CD4-positive, alpha-beta memory T cell (primary cell): ENCODE measurements at regions of chr15 and their contacts with region 1.

Region 1: DNA sequence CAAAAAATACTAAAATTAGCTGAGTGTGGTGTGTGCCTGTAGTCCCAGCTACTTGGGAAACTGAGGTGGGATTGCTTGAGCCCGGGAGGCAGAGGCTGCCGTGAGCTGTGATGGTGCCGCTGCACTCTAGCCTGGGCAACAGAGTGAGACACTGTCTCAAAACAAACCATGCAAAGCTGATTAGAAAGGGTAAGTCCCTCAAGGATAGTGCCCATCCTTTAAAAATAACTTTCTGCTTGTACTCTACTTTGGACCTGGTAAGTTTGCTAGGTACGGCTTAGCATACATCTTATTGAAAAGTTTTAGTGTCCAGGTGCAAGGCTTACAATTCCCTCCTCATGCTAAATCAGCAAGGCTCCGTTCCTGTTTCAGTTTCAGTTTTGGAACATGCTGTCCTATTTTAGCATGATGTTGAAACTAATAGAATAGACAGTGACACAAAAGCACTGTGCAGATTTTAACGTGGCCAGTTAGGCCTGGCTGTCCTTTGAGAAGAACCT is 21.4 kb downstream of the FEM1B start:
- DNase-seq: peak in 4 of 5 donors; percentile 39 to 46 (median 42)
- H3K4me3 ChIP-seq: peak overlapping the region; percentile 43 to 46
- H3K4me3 Mint-ChIP-seq: peak overlapping the region; percentile 77 to 91 (median 84)
- H3K27ac ChIP-seq: peak overlapping the region; percentile 47
- H3K27ac Mint-ChIP-seq: peak overlapping the region; percentile 62 to 95 (median 91)
- H3K4me1 ChIP-seq: peaks cover 17% of the 10 kb centered on the region
- H3K4me1 Mint-ChIP-seq: peaks cover 15 to 40% (median 26%) of the 10 kb centered on the region in 4 donors
- H3K27me3 ChIP-seq: no peaks in the 10 kb centered on the region
- H3K27me3 Mint-ChIP-seq: no peaks in the 10 kb centered on the region

Region 2: DNA sequence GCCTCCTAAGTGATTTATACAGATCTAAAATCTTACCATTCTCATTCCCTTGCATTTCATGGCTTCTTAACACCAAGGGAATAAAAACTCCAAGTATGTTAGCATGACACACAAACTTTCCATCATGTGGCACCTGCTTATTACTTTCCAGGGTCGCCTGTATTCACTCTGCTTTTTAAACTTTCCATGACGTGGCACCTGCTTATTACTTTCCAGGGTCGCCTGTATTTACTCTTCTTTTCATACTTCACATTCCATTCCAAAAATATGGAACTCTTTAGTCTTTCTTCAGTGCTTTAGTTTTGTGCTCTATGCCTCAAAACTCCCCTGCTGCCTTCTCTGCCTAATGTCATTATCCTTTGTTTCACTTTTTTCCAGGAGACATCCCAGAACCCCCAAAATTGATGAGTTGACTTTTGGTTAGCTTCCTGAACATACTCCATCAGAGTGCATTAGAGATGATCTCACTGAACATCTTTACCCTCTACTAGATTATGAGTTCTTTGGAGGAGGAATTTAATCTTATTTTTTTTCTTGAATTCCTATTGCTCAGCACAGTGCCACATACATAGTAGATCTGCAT is 140.8 kb before region 1 on chr15:
- CTCF ChIA-PET with region 1: no interaction called
- POLR2A ChIA-PET with region 1: no interaction called
- intact Hi-C with region 1: no loop called
- DNase-seq: no peak
- H3K4me3 ChIP-seq: no peak overlapping the region
- H3K4me3 Mint-ChIP-seq: no peak overlapping the region
- H3K27ac ChIP-seq: no peak overlapping the region
- H3K27ac Mint-ChIP-seq: no peak overlapping the region
- H3K4me1 ChIP-seq: no peaks in the 10 kb centered on the region
- H3K4me1 Mint-ChIP-seq: peaks cover 0 to 6% (median 4%) of the 10 kb centered on the region in 4 donors
- H3K27me3 ChIP-seq: no peaks in the 10 kb centered on the region
- H3K27me3 Mint-ChIP-seq: no peaks in the 10 kb centered on the region

Region 3: GRCh38 chr15:68283401-68283800 is 15.5 kb before region 1 on chr15:
- CTCF ChIA-PET with region 1: interaction called, 3 read pairs
- POLR2A ChIA-PET with region 1: interaction called, 26 read pairs
- intact Hi-C with region 1: loop called (anchors 2 kb)
- DNase-seq: no peak
- H3K4me3 ChIP-seq: no peak overlapping the region
- H3K4me3 Mint-ChIP-seq: peak overlapping the region in 3 of 8 donors; percentile 25 to 61 (median 51)
- H3K27ac ChIP-seq: no peak overlapping the region
- H3K27ac Mint-ChIP-seq: peak overlapping the region in 1 of 7 donors; percentile 33
- H3K4me1 ChIP-seq: peaks cover 79% of the 10 kb centered on the region
- H3K4me1 Mint-ChIP-seq: peaks cover 61 to 81% (median 71%) of the 10 kb centered on the region in 4 donors
- H3K27me3 ChIP-seq: no peaks in the 10 kb centered on the region
- H3K27me3 Mint-ChIP-seq: no peaks in the 10 kb centered on the region

Region 4: GRCh38 chr15:68372291-68372811 is 73.4 kb after region 1 on chr15:
- CTCF ChIA-PET with region 1: no interaction called
- POLR2A ChIA-PET with region 1: no interaction called
- intact Hi-C with region 1: no loop called
- DNase-seq: no peak
- H3K4me3 ChIP-seq: no peak overlapping the region
- H3K4me3 Mint-ChIP-seq: no peak overlapping the region
- H3K27ac ChIP-seq: no peak overlapping the region
- H3K27ac Mint-ChIP-seq: no peak overlapping the region
- H3K4me1 ChIP-seq: no peaks in the 10 kb centered on the region
- H3K4me1 Mint-ChIP-seq: peaks cover 0 to 2% (median 0%) of the 10 kb centered on the region in 4 donors
- H3K27me3 ChIP-seq: no peaks in the 10 kb centered on the region
- H3K27me3 Mint-ChIP-seq: peaks cover 2 to 3% of the 10 kb centered on the region in 2 donors

Region 5: DNA sequence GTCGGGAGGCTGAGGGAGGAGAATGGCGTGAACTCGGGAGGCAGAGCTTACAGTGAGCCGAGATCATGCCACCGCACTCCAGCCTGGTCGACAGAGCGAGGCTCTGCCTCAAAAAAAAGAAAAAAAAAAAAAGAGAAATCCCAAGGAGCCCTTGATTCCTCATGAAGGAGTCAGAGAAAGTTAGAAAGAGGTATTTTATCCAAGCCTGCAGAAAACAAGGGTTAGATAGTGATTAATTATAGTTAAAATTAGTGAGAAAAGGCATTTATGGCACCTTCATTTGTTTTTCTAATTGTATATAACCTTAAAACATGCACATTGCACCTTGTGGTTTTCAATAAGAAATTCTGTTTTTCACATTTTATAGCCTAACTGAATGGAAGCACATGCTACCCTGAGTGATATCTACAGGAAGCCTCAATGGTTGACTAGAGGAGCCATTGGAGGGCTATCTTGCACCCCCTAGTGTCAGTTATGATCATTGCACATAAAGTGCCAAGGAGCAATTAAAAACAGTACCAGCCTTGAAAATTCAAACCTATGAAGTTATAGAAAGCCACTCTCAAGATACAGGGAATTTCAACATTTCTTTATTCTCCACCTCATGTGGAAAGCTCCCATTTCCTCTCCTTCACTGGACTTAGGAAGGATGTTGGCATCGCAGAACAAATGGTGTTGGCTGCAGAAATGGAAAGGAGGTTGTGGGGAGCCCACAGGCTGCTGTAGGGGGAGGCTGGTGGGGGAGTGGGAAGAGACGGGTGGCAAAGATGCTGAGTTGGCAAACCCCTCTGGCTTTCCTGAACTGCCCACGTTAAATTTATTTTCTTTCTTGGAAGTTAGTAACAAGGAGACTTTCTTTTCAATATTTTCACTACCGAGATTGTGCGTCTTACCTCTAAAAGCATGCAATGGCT is 84.5 kb after region 1 on chr15:
- CTCF ChIA-PET with region 1: no interaction called
- POLR2A ChIA-PET with region 1: no interaction called
- intact Hi-C with region 1: no loop called
- DNase-seq: peak in 4 of 5 donors; percentile 39 to 53 (median 42)
- H3K4me3 ChIP-seq: no peak overlapping the region
- H3K4me3 Mint-ChIP-seq: no peak overlapping the region
- H3K27ac ChIP-seq: no peak overlapping the region
- H3K27ac Mint-ChIP-seq: no peak overlapping the region
- H3K4me1 ChIP-seq: peaks cover 11% of the 10 kb centered on the region
- H3K4me1 Mint-ChIP-seq: peaks cover 8 to 13% (median 11%) of the 10 kb centered on the region in 4 donors
- H3K27me3 ChIP-seq: no peaks in the 10 kb centered on the region
- H3K27me3 Mint-ChIP-seq: peaks cover 0 to 5% of the 10 kb centered on the region in 2 donors